ENCODE measurements at regions of chr15 and their contacts with region 1.

Region 1: DNA sequence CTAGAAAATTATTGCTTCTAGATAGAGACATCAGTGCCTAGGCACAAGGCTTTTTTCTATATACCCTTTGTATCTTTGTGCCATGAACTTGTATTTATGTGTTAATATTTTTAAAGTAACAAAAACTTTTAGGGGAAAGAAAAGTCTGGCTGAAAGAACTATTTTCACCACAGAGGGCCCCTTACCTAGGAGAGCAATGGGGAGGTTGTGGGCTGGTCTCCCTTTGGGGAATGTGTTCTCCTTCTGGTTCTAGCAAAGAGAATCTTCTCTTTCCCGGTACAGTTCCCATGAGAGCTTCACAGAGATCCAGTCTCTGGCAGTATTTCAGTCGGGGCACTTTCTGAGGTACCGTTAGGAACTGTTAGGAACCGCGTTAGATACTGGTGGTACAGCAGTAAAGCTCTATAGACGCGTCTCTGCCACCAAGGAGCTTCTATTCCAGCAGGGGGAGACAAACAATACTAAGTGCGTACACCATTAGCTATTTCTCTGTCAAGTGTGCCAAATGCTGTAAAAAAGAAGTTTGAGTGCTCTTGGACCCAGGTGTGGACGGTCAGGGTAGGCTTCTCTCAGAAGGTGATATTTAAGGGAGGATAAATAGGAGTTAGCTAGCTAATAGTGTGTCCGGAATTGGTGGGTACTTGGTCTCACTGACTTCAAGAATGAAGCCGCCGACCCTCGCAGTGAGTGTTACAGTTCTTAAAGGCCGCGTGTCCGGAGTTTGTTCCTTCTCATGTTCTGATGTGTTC is 4.6 kb upstream of the EPB42 start:
- DNase-seq: peak; percentile 82
- ATAC-seq: peak; percentile 76
- H3K4me3 ChIP-seq: no peak overlapping the region
- H3K4me3 Mint-ChIP-seq: no peak overlapping the region
- H3K27ac ChIP-seq: no peak overlapping the region
- H3K27ac Mint-ChIP-seq: no peak overlapping the region
- H3K4me1 ChIP-seq: peaks cover 0 to 7% of the 10 kb centered on the region in 2 donors
- H3K4me1 Mint-ChIP-seq: peaks cover 7% of the 10 kb centered on the region
- H3K27me3 ChIP-seq: no peaks in the 10 kb centered on the region
- H3K27me3 Mint-ChIP-seq: peaks cover 10% of the 10 kb centered on the region
- CTCF ChIP-seq: peak; percentile 80

Region 2: GRCh38 chr15:43056696-43057095 is 168.7 kb before region 1 on chr15:
- CTCF ChIA-PET with region 1: interaction called, 10 read pairs
- POLR2A ChIA-PET with region 1: no interaction called
- intact Hi-C with region 1: no loop called
- DNase-seq: no peak
- ATAC-seq: no peak
- H3K4me3 ChIP-seq: no peak overlapping the region
- H3K4me3 Mint-ChIP-seq: no peak overlapping the region
- H3K27ac ChIP-seq: no peak overlapping the region
- H3K27ac Mint-ChIP-seq: no peak overlapping the region
- H3K4me1 ChIP-seq: no peaks in the 10 kb centered on the region
- H3K4me1 Mint-ChIP-seq: no peaks in the 10 kb centered on the region
- H3K27me3 ChIP-seq: no peaks in the 10 kb centered on the region
- H3K27me3 Mint-ChIP-seq: no peaks in the 10 kb centered on the region
- CTCF ChIP-seq: no peak

Region 3: GRCh38 chr15:43204016-43204901 is 21.1 kb before region 1 on chr15:
- CTCF ChIA-PET with region 1: interaction called, 19 read pairs
- POLR2A ChIA-PET with region 1: no interaction called
- intact Hi-C with region 1: no loop called
- DNase-seq: peak; percentile 55
- ATAC-seq: peak; percentile 64
- H3K4me3 ChIP-seq: no peak overlapping the region
- H3K4me3 Mint-ChIP-seq: no peak overlapping the region
- H3K27ac ChIP-seq: no peak overlapping the region
- H3K27ac Mint-ChIP-seq: no peak overlapping the region
- H3K4me1 ChIP-seq: no peaks in the 10 kb centered on the region
- H3K4me1 Mint-ChIP-seq: peaks cover 6% of the 10 kb centered on the region
- H3K27me3 ChIP-seq: peaks cover 0 to 4% (median 1%) of the 10 kb centered on the region in 4 experiments
- H3K27me3 Mint-ChIP-seq: peaks cover 16% of the 10 kb centered on the region
- CTCF ChIP-seq: peak; percentile 68

Region 4: GRCh38 chr15:43237842-43238470 is 12.6 kb after region 1 on chr15:
- CTCF ChIA-PET with region 1: interaction called, 19 read pairs
- POLR2A ChIA-PET with region 1: no interaction called
- intact Hi-C with region 1: no loop called
- DNase-seq: no peak
- ATAC-seq: no peak
- H3K4me3 ChIP-seq: no peak overlapping the region
- H3K4me3 Mint-ChIP-seq: no peak overlapping the region
- H3K27ac ChIP-seq: no peak overlapping the region
- H3K27ac Mint-ChIP-seq: no peak overlapping the region
- H3K4me1 ChIP-seq: peaks cover 0 to 5% of the 10 kb centered on the region in 2 donors
- H3K4me1 Mint-ChIP-seq: peaks cover 5% of the 10 kb centered on the region
- H3K27me3 ChIP-seq: peaks cover 0 to 11% (median 3%) of the 10 kb centered on the region in 4 experiments
- H3K27me3 Mint-ChIP-seq: peaks cover 22% of the 10 kb centered on the region
- CTCF ChIP-seq: no peak

Region 5: DNA sequence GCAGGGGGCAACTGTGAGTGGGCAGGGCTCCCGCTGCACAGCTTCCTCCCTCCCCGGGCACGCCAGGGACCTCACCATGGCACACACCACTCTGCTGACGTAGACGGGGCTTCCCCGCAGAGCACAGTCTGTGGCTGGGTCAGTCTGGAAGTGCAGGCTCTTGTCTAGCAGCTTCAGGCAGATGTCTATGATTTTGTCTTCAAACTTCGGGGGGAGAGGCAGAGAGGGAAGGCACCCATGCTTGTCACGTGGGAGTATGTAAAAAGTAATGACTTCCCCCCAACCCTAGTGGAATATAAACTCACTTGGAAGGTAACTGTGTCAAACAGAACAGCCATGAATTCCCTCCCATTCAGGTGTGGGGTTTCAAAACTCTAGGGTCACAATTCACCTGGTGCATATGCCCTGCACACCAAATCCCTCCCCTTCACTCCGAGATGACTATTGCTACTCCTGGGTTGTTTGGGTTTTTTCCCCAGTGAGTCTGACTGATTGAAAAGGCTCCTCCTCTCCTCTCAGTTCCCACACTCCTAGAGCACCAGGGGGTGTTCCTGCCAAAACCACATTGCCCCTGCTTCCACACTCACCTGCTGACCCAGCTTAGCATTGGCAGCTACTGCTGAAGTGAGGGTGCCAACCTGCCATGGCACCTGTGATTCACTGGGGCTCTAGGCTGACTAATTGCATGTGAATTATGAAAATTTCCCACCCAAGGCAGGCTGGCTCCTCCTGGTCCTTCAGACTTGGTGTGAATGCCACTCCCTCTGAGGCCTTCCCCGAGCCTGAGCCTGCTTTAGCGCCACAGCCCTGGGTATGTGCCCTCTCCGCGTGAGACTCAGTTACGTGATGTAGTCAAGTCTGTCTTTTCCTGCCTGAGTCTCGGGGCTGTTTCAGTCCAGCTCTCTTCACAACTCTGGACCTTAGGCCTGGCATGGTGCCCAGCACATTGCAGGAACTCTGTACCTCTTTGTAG is 28.3 kb after region 1 on chr15:
- CTCF ChIA-PET with region 1: interaction called, 23 read pairs
- POLR2A ChIA-PET with region 1: no interaction called
- intact Hi-C with region 1: no loop called
- DNase-seq: peak; percentile 72
- ATAC-seq: peak; percentile 88
- H3K4me3 ChIP-seq: no peak overlapping the region
- H3K4me3 Mint-ChIP-seq: peak overlapping the region; percentile 9
- H3K27ac ChIP-seq: no peak overlapping the region
- H3K27ac Mint-ChIP-seq: peak overlapping the region; percentile 78
- H3K4me1 ChIP-seq: peaks cover 13 to 15% of the 10 kb centered on the region in 2 donors
- H3K4me1 Mint-ChIP-seq: peaks cover 32% of the 10 kb centered on the region
- H3K27me3 ChIP-seq: no peaks in the 10 kb centered on the region
- H3K27me3 Mint-ChIP-seq: no peaks in the 10 kb centered on the region
- CTCF ChIP-seq: no peak

Region 6: DNA sequence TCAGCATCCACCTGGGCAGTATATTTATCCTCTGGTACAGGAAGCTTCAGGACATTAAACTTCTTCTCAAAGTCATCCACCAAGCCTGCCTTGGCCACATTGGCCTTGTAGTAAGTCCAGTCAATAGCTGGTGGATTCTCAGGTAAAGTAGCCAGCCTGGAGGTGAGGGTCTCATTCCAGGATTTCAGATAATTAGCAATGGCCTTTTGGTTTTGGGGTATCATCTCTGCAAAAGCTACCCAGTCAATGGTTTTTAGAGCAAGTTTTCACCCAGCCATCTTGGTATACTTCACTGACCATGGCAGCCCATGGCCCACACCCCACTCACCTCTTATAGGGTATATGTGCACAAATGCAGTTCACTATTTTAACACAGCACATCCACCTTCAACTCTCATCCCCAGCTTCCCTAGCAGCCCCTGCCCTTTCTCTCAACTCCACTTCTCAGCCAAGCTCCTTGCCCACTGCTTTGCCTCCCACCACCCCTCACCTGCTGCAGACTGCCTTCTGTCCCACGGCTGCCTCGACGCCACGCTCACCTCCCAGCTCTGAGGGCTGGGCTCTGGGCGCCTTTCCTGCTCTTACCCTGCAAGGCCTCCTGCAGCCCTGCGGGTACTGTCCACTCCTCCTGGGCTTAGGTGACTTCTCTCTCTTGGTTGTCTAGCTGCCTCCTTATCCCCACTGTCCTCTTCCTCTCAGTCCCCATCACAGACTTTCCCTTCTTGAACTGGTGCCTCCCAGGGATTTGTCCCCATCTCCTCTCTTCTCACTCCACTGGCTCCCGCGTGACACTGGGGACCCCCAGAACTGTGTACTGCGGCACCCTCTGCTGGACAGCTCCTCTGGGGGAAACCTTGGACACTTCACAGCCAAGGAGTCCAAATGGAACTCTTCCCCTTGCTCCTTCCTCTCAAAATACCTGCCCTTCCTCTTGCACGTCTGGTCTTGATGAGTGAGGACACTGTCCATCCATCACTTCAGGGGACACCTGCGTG is 43.0 kb after region 1 on chr15:
- CTCF ChIA-PET with region 1: interaction called, 23 read pairs
- POLR2A ChIA-PET with region 1: no interaction called
- intact Hi-C with region 1: no loop called
- DNase-seq: no peak
- ATAC-seq: no peak
- H3K4me3 ChIP-seq: no peak overlapping the region
- H3K4me3 Mint-ChIP-seq: no peak overlapping the region
- H3K27ac ChIP-seq: no peak overlapping the region
- H3K27ac Mint-ChIP-seq: peak overlapping the region; percentile 1
- H3K4me1 ChIP-seq: peaks cover 26 to 27% of the 10 kb centered on the region in 2 donors
- H3K4me1 Mint-ChIP-seq: peaks cover 39% of the 10 kb centered on the region
- H3K27me3 ChIP-seq: no peaks in the 10 kb centered on the region
- H3K27me3 Mint-ChIP-seq: peaks cover 8% of the 10 kb centered on the region
- CTCF ChIP-seq: no peak